ENCODE measurements at regions of chr12 and their contacts with region 1.

Region 1: GRCh38 chr12:49309391-49309790 is 13.7 kb upstream of the TROAP start:
- DNase-seq: no peak
- H3K4me3 ChIP-seq: no peak overlapping the region
- H3K27ac ChIP-seq: no peak overlapping the region
- H3K4me1 ChIP-seq: no peaks in the 10 kb centered on the region
- H3K27me3 ChIP-seq: no peaks in the 10 kb centered on the region
- CTCF ChIP-seq: no peak

Region 2: DNA sequence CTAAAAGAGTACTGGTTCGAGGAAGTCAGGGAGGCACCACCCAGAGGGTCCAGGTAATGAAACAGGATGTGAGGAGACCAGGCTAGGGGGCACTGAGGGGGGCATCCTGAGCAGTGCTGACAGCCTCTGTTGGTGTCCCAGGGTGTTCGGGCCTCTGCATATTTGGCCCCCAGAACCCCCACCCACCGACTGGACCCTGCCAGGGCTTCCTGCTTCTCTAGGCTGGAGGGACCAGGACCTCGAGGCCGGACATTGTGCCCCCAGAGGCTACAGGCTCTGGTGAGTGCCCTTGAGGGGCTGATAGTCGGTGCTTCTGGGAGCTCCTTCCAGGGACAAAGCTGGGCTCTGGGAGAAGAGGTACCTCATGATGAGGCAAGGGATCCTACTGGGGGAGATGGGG is 16.2 kb after region 1 on chr12:
- CTCF ChIA-PET with region 1: no interaction called
- POLR2A ChIA-PET with region 1: no interaction called
- intact Hi-C with region 1: no loop called
- DNase-seq: no peak
- H3K4me3 ChIP-seq: no peak overlapping the region
- H3K27ac ChIP-seq: no peak overlapping the region
- H3K4me1 ChIP-seq: peaks cover 9% of the 10 kb centered on the region; the same call in 1 of the 2 replicates
- H3K27me3 ChIP-seq: no peaks in the 10 kb centered on the region
- CTCF ChIP-seq: no peak

Region 3: DNA sequence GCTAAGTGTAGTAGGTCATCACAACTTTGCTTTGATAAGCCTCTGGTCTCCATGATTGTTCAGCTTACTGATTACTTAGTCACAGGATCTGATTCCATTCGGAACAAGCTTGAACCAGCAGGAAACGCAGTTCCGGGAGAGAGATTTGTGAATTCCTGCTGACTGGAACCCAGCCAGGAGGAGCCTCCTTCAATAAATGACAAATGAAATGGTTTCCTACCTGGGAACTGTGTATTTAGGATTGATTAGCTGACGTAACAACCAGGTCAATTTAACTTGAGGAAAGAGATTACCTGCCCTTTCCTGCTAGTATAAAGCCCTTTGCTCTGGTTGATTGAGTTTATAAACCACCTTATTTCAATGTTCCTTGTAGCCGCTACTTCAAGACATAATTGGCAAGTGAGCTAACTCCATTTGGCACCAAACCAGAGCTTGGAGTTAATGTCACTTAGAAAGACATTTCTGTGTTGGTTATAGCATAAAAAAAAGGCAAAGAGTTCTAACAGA is 194.3 kb after region 1 on chr12:
- CTCF ChIA-PET with region 1: interaction called, 11 read pairs
- POLR2A ChIA-PET with region 1: no interaction called
- intact Hi-C with region 1: no loop called
- DNase-seq: no peak
- H3K4me3 ChIP-seq: no peak overlapping the region
- H3K27ac ChIP-seq: no peak overlapping the region
- H3K4me1 ChIP-seq: no peaks in the 10 kb centered on the region
- H3K27me3 ChIP-seq: no peaks in the 10 kb centered on the region
- CTCF ChIP-seq: no peak

Region 4: DNA sequence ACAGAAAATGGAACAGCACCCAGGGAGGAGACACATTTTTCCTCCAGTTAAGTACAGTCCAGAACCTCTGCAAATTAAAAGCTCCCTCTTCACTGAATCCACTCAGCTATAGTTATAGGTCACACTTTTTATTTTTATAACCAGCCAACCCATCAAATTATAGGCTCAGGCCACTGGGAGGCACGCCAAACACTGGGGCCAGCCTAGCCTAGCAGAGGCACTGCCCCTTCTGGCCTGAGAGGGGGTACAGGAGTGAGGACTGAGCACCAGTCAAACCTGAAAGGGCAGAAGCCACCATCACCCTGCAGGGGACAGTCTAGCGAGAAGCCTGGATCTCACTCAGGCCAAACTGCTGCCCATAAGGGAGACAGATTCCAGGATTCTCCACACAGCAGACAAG is 378.6 kb after region 1 on chr12:
- CTCF ChIA-PET with region 1: no interaction called
- POLR2A ChIA-PET with region 1: no interaction called
- intact Hi-C with region 1: no loop called
- DNase-seq: no peak
- H3K4me3 ChIP-seq: no peak overlapping the region
- H3K27ac ChIP-seq: no peak overlapping the region
- H3K4me1 ChIP-seq: no peaks in the 10 kb centered on the region
- H3K27me3 ChIP-seq: no peaks in the 10 kb centered on the region
- CTCF ChIP-seq: no peak

Measured in PC-9 (cell line).